ENCODE measurements at regions of chr16 and their contacts with region 1.

Region 1: DNA sequence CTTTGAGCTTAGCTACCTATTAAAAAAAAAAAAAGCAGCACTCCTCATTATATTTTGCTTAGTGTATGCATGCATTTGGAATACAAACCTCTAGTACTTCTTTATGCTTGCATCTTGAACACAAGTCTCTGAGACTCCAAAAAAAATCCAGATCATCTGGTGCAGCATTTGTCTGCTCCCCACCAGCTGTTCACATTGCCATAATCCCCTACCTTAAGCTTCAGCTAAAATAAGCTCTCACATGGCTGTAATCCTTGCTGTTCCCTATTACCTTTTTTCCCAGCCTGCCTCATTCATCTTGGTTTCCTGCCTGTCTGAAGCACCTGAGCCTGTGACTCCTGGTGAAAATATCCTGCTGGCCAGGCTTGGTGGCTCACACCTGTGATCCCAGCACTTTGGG is 7.5 kb upstream of the NFATC2IP start:
- DNase-seq: no peak
- ATAC-seq: no peak
- H3K4me3 ChIP-seq: no peak overlapping the region
- H3K27ac ChIP-seq: no peak overlapping the region
- H3K4me1 ChIP-seq: peaks cover 8% of the 10 kb centered on the region
- H3K27me3 ChIP-seq: no peaks in the 10 kb centered on the region
- CTCF ChIP-seq: no peak

Region 2: GRCh38 chr16:28823872-28824716 is 119.2 kb before region 1 on chr16:
- intact Hi-C with region 1: loop called in 1 of 2 experiments (anchors 5 kb)
- DNase-seq: peak; percentile 98 to 99
- ATAC-seq: peak; percentile 91 to 92 (median 91)
- H3K4me3 ChIP-seq: peak overlapping the region; percentile 84
- H3K27ac ChIP-seq: peak overlapping the region; percentile 93
- H3K4me1 ChIP-seq: peaks cover 19% of the 10 kb centered on the region
- H3K27me3 ChIP-seq: no peaks in the 10 kb centered on the region
- CTCF ChIP-seq: no peak

Region 3: DNA sequence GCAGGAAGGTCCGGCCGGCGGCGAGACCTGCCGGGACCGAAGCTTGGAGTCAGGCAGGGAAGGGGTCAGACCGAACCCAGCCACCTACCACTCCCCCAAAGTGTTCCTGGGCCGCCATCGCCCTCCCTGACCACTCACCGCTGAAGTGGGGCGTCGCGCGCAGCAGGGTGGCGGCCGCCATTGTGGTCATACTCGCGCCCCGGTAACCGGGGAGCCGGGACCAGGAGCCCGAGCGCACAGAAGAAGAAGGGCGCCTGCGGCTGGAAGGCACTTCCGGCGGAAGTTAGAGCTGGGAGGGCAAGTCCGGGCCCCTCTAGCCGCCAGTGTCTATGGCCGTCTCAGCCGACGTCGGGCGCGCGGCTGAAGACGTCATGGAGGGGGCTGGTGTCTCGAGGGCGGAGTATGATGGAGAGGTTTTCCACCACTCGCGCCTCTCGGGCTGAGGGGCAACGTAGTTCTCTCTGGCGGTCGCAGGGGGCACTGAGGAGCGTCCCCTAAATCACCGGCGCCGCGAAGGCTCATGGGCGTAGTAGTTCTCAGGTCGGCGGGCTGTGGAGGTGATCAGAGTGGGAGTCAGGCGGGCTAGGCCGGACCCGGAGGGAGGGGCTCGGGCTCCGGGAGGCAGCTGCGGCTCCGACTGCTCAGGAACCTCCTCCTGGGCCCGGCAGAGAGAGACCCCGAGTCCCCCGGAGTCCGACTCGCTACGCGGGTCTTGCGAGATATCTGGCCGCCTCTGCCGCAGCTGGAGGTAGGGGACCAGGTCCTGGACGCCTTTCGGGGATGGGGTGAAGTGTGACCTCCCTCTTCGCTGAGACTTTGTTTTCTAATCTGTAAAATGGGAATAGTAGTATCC is 97.0 kb before region 1 on chr16 and contains the start of gene TUFM:
- intact Hi-C with region 1: loop called in 1 of 2 experiments (anchors 5 kb)
- DNase-seq: peak; percentile 98 to 99
- ATAC-seq: peak; percentile 95 to 97 (median 96)
- H3K4me3 ChIP-seq: peak within 1 kb of the TSS; percentile 95
- H3K27ac ChIP-seq: peak within 1 kb of the TSS; percentile 89
- H3K4me1 ChIP-seq: peaks cover 19% of the 10 kb centered on the region
- H3K27me3 ChIP-seq: no peaks in the 10 kb centered on the region
- CTCF ChIP-seq: peak; percentile 66
- total RNA-seq, gene TUFM: 155 to 233 (median 187) TPM

Region 4: GRCh38 chr16:28863929-28864793 is 79.1 kb before region 1 on chr16:
- intact Hi-C with region 1: loop called in 1 of 2 experiments (anchors 5 kb)
- DNase-seq: peak in 1 of 2 donors; percentile 33
- ATAC-seq: peak; percentile 18 to 43 (median 22)
- H3K4me3 ChIP-seq: peak overlapping the region; percentile 95
- H3K27ac ChIP-seq: peak overlapping the region; percentile 98
- H3K4me1 ChIP-seq: peaks cover 10% of the 10 kb centered on the region
- H3K27me3 ChIP-seq: no peaks in the 10 kb centered on the region
- CTCF ChIP-seq: no peak

Region 5: GRCh38 chr16:28873536-28874201 is 69.6 kb before region 1 on chr16:
- intact Hi-C with region 1: loop called (anchors 1 to 2 kb)
- DNase-seq: peak in 1 of 2 donors; percentile 65
- ATAC-seq: peak; percentile 26 to 43 (median 30)
- H3K4me3 ChIP-seq: no peak overlapping the region
- H3K27ac ChIP-seq: peak overlapping the region; percentile 46
- H3K4me1 ChIP-seq: peaks cover 22% of the 10 kb centered on the region
- H3K27me3 ChIP-seq: no peaks in the 10 kb centered on the region
- CTCF ChIP-seq: peak; percentile 64